Activated T-helper 2 cell treated with anti-CD3 and anti-CD28 coated beads, Interferon-gamma antibody, Interleukin-2, Interleukin-4, amounts not matched to agents 10 μg/mL and 5 μg/mL and 100 μg/mL, durations not matched to agents 14 hours and 24 hours and 36 hours (primary cell): ENCODE measurements at regions of chr11 and their contacts with region 1.

Region 1: GRCh38 chr11:102614485-102614884 is 10.6 kb downstream of the MMP20 start:
- DNase-seq: no peak
- H3K4me3 Mint-ChIP-seq: no peak overlapping the region
- H3K27ac Mint-ChIP-seq: no peak overlapping the region
- H3K4me1 Mint-ChIP-seq: peaks cover 18% of the 10 kb centered on the region
- H3K27me3 Mint-ChIP-seq: no peaks in the 10 kb centered on the region

Region 2: GRCh38 chr11:102341844-102342318 is 272.6 kb before region 1 on chr11:
- intact Hi-C with region 1: loop called (anchors 2 kb)
- DNase-seq: peak; percentile 56
- H3K4me3 Mint-ChIP-seq: no peak overlapping the region
- H3K27ac Mint-ChIP-seq: no peak overlapping the region
- H3K4me1 Mint-ChIP-seq: peaks cover 27% of the 10 kb centered on the region
- H3K27me3 Mint-ChIP-seq: no peaks in the 10 kb centered on the region

Region 3: DNA sequence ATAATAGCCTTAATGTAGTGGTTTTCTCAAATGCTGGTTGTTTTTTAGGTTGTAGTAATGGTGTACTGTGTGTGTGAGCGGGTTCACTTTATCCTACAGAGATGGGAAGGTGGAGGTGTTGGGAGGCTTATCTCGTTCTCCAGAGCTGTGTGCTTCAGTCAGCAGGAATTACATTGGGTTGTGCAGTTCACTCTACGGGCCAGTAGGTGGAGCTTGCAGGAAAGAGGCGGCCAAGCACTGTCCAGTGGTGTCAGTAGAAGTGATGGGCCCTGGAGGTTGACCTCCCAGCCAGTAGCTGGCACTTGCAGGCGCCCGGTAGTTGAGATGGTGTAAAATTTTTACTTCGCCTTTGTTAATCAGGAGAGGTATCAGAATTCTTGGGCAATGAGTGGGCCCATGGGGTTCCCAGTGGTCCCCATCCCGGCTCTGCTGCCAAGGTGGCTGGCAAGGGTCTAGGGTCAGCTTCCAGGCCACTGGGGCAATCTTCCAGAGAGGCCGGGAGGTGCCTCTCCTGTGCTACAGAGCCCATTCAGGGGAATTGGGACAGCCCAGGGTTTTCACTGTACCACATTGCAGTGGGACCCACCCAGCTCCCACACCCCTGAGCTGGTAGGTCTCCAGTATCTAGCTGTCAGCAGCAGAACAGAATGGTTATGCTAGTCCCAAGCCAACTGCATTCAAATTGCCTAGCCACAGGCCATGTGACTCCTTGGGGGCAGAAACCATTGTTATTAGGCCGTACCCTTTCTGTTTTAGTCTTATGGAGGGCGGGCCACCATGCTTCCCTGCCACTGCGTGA is 223.6 kb before region 1 on chr11:
- intact Hi-C with region 1: loop called (anchors 5 kb)
- DNase-seq: peak; percentile 46
- H3K4me3 Mint-ChIP-seq: no peak overlapping the region
- H3K27ac Mint-ChIP-seq: no peak overlapping the region
- H3K4me1 Mint-ChIP-seq: peaks cover 7% of the 10 kb centered on the region
- H3K27me3 Mint-ChIP-seq: no peaks in the 10 kb centered on the region

Region 4: DNA sequence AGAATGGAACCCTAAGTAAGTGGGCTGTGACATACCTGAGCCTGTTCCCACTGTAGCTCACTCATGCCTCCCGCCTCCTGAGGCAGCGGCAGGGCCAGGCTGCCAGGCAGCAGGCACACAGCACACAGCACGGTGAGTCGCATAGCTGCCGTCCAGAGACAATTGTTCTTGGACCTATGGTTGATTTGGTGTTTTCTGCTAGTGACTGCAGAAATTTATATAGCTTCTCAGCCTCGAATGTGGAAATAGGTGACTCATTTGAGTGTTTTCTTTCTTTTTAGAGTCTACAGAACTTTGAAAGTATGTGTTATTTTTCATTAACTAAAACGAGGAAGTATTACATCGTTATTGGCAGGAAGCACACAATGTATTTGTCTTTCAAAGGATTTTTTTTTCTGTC is 83.9 kb before region 1 on chr11 and contains the start of gene MMP7:
- intact Hi-C with region 1: loop called (anchors 5 kb)
- DNase-seq: no peak
- H3K4me3 Mint-ChIP-seq: no peak within 1 kb of the TSS
- H3K27ac Mint-ChIP-seq: no peak within 1 kb of the TSS
- H3K4me1 Mint-ChIP-seq: peaks cover 13% of the 10 kb centered on the region
- H3K27me3 Mint-ChIP-seq: peaks cover 15% of the 10 kb centered on the region
- total RNA-seq, gene MMP7: not detected in 2 replicates

Region 5: DNA sequence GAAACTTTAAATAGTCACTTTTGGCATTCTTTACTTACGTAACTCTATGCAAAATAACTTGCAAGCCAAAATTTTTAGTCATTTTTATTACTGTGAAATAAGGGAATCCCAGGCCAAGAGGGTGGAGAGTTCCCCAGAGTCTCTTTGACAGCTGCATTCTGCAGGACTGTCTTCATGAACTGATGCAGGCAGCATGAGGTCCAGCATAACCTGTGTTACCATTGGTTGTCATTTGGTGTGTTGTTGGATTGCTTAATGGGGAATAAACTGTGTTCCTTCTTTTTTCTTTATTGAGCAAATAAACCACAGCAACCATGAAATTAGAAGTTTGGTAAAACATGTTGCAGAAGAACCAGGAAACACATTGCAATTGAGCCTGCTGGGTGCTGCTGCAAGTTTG is 66.5 kb after region 1 on chr11:
- intact Hi-C with region 1: no loop called
- DNase-seq: no peak
- H3K4me3 Mint-ChIP-seq: no peak overlapping the region
- H3K27ac Mint-ChIP-seq: no peak overlapping the region
- H3K4me1 Mint-ChIP-seq: no peaks in the 10 kb centered on the region
- H3K27me3 Mint-ChIP-seq: peaks cover 17% of the 10 kb centered on the region

Region 6: GRCh38 chr11:102810945-102811660 is 196.6 kb after region 1 on chr11:
- intact Hi-C with region 1: no loop called
- DNase-seq: no peak
- H3K4me3 Mint-ChIP-seq: no peak overlapping the region
- H3K27ac Mint-ChIP-seq: no peak overlapping the region
- H3K4me1 Mint-ChIP-seq: no peaks in the 10 kb centered on the region
- H3K27me3 Mint-ChIP-seq: no peaks in the 10 kb centered on the region